GM13977 (cell line): ENCODE measurements at regions of chr9 and their contacts with region 1.

Region 1: DNA sequence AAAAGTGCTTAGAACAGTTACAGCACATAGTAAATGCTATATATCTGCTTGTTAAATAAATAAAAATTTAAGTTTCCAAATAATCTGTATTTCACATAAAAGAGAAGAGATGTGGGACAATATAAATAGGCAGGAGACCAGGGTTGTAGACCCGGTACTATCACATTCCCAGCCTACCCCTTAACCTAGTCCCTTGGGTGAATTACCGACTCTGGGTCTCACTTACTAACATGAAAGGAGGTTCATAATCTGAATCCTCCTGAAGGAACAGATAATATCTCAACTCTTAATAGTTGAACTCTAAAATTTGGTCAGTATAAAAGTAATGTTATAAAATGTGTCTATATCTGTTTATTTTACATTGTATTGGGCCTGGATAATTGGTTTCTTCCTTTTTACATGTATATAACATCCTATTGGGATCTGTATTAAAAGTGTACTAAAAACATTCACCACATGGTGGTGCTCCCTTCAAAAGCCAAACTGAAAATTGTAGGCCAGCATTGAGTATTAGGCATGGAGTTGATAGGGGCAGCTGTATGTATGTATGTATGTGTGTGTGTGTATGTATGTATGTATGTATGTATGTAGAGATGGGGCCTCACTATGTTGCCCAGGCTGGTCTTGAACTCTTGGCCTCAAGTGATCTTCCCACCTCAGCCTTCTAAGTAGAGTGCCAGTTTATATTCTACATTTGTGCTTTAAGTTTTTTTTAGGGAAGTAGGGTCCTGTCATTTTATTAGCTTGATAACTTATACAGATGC is 64.2 kb upstream of the ABL1 start:
- DNase-seq: peak; percentile 63
- CTCF ChIP-seq: peak; percentile 59

Region 2: GRCh38 chr9:130866474-130866965 is 95.7 kb after region 1 on chr9:
- in situ Hi-C with region 1: loop called (anchors 10 kb)
- DNase-seq: peak; percentile 45
- CTCF ChIP-seq: peak; percentile 74